HCT116 (cell line): ENCODE measurements at regions of chr6 and their contacts with region 1.

Region 1: DNA sequence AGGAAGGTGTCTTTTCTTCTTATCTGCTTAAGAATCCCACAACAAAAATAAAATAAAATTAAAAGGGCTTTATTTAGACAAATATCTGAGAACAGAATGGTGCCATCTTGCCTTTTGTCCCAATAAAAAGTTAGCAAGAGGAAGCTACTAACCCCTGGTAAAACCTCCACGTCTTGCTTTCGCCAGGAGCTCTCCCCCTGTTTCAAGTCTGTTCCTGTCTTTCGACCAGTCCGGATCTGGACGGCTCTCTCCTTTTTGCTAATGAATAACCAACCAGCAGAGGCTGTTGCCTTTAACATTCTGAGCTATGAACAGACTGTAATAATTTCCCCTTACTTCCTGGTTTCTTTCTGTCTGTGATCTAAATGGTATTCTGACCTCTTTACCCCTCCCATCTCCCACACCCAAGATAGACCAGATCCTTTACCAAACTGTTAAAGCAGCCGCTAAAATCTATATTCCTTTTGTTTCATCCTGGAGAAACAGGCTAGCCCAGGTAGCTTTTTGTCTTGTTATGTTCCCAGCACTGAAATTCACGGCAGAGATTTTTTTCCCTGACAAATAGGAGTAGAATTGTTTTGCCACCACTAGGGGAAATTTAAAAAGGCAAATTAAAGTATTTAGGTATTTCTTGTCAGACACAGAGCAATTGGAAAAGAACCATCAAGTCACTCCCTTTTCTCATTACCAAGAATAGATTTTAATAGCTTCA is at the start of gene FRK:
- DNase-seq: peak; percentile 62
- ATAC-seq: peak; percentile 81
- H3K4me3 ChIP-seq: peak within 1 kb of the TSS; percentile 52 to 61
- H3K27ac ChIP-seq: peak within 1 kb of the TSS; percentile 85
- H3K4me1 ChIP-seq: peaks cover 10 to 28% of the 10 kb centered on the region in 2 experiments; a peak in 3 of 4 replicates
- H3K27me3 ChIP-seq: no peaks in the 10 kb centered on the region
- CTCF ChIP-seq: peak; percentile 21 to 53 (median 27); a peak in 4 of 6 replicates
- POLR2A ChIP-seq: no peak
- RAD21 ChIP-seq: 0 out of 2 replicates have a peak, but pooled peaks have one; percentile 4
- total RNA-seq, gene FRK: 3.7 TPM

Region 2: GRCh38 chr6:115896538-115897129 is 164.1 kb before region 1 on chr6:
- CTCF ChIA-PET with region 1: no interaction called
- POLR2A ChIA-PET with region 1: no interaction called
- RAD21 ChIA-PET with region 1: no interaction called
- intact Hi-C with region 1: no loop called
- DNase-seq: peak; percentile 34
- ATAC-seq: peak; percentile 70
- H3K4me3 ChIP-seq: no peak overlapping the region
- H3K27ac ChIP-seq: no peak overlapping the region
- H3K4me1 ChIP-seq: no peaks in the 10 kb centered on the region
- H3K27me3 ChIP-seq: peaks cover 9% of the 10 kb centered on the region; the same call in 1 of the 2 replicates
- CTCF ChIP-seq: peak; percentile 51 to 84 (median 70); a peak in 5 of 6 replicates
- POLR2A ChIP-seq: no peak
- RAD21 ChIP-seq: peak; percentile 78

Region 3: DNA sequence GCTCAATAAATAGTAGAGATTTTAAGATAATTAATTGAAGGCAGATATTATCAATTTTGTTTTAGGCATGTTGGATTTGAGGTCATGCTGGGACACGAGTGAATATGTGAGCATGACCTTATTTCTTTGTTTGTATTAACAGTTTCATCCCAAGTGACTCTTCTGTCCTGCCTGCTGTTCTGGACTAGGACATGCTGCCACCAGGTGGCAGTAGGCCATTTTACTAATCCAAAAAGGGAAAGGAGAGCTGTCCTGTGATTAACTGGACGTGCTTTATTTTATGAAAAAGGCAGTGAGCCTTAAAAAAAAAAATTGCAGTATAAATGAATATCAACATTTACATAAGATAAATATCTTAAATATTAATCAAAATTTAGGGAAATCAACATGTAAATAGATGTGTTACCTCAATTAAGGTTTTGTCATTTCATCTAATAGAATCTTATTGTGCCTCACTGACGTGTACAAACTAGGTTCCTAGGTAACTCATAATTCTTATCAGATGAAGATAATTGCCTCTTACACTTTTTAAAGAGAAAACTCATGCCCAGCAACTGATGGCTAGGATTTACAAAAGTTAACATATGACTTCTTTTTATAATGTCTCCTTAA is 49.8 kb before region 1 on chr6:
- CTCF ChIA-PET with region 1: interaction called, 8 read pairs
- POLR2A ChIA-PET with region 1: interaction called, 4 read pairs
- RAD21 ChIA-PET with region 1: no interaction called
- intact Hi-C with region 1: loop called (anchors 1 kb)
- DNase-seq: peak; percentile 67
- ATAC-seq: peak; percentile 78
- H3K4me3 ChIP-seq: peak overlapping the region in 1 of 2 experiments; percentile 6; a peak in 1 of 4 replicates
- H3K27ac ChIP-seq: peak overlapping the region; percentile 21; the same call in 1 of the 2 replicates
- H3K4me1 ChIP-seq: peaks cover 16 to 32% of the 10 kb centered on the region in 2 experiments
- H3K27me3 ChIP-seq: no peaks in the 10 kb centered on the region
- CTCF ChIP-seq: peak; percentile 73 to 79 (median 76); a peak in 5 of 6 replicates
- POLR2A ChIP-seq: no peak
- RAD21 ChIP-seq: peak; percentile 83

Region 4: DNA sequence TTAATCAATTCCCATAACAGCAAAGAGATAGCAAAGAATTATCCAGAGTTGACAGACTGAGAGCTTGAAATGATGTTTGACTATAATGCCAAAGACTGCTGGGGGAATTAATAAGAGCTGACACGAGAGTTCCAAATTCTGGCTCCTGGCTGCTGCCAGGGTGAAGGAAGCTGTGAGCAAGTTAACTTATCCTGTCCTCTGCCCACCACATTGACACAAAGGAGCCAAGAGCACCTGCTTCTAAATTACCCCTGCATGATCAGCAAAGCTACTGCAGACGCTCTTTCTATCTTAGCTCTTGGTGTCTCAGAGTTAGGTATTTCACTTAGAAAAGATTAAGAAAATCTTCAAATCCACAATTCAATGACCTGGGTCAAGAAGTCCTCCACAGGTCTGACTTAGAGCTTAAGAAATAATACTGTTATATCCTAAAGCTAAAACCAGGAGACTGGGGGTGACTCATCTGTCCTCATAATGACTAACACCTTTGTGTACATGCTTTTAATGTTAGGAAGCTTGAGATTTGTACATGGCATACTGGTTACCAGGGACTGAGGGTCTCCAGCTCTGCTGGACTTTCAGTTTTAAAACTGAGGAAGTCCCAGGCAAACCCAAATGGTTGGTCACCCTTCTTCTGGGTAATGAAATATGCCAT is 13.2 kb after region 1 on chr6:
- CTCF ChIA-PET with region 1: interaction called, 14 read pairs
- POLR2A ChIA-PET with region 1: interaction called, 11 read pairs
- RAD21 ChIA-PET with region 1: no interaction called
- intact Hi-C with region 1: no loop called
- DNase-seq: no peak
- ATAC-seq: peak; percentile 80
- H3K4me3 ChIP-seq: no peak overlapping the region
- H3K27ac ChIP-seq: no peak overlapping the region
- H3K4me1 ChIP-seq: peaks cover 12 to 24% of the 10 kb centered on the region in 2 experiments
- H3K27me3 ChIP-seq: no peaks in the 10 kb centered on the region
- CTCF ChIP-seq: no peak
- POLR2A ChIP-seq: no peak
- RAD21 ChIP-seq: no peak

Region 5: DNA sequence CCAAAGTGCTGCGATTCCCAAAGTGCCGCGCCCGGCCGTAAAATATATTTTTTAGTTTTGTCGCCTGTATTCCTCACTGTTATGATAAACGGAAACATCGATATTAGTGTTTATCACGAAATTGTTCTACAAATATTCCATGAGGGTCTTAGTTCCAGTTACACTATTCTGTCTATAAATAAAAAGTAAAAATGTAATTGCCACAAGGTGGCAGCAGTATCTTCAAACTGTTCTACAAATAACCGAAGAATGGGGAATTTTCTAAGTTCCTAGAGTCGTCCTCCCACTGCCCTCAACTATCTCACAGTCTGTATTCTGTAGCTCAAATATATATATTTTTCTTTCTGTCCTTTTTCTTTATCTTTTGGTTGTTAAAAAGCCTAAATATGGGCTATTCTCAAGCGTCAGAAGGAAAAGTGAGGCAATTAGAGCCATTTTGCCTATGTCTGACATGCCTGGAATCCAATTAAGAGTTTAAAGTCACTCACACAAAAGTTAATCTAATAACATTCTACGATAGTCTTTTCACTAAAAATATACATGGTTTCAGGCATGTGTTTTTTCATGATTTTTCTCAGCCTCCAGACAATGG is 718.9 kb after region 1 on chr6:
- CTCF ChIA-PET with region 1: no interaction called
- POLR2A ChIA-PET with region 1: no interaction called
- RAD21 ChIA-PET with region 1: no interaction called
- intact Hi-C with region 1: no loop called
- DNase-seq: peak; percentile 28
- ATAC-seq: peak; percentile 76
- H3K4me3 ChIP-seq: no peak overlapping the region
- H3K27ac ChIP-seq: no peak overlapping the region
- H3K4me1 ChIP-seq: 0 out of 4 replicates have a peak, but pooled peaks cover 0 to 3% of the 10 kb centered on the region in 2 experiments
- H3K27me3 ChIP-seq: no peaks in the 10 kb centered on the region
- CTCF ChIP-seq: peak; percentile 24 to 64 (median 46); a peak in 4 of 6 replicates
- POLR2A ChIP-seq: no peak
- RAD21 ChIP-seq: peak; percentile 57